Caco-2 (cell line): ENCODE measurements at regions of chr10 and their contacts with region 1.

Region 1: DNA sequence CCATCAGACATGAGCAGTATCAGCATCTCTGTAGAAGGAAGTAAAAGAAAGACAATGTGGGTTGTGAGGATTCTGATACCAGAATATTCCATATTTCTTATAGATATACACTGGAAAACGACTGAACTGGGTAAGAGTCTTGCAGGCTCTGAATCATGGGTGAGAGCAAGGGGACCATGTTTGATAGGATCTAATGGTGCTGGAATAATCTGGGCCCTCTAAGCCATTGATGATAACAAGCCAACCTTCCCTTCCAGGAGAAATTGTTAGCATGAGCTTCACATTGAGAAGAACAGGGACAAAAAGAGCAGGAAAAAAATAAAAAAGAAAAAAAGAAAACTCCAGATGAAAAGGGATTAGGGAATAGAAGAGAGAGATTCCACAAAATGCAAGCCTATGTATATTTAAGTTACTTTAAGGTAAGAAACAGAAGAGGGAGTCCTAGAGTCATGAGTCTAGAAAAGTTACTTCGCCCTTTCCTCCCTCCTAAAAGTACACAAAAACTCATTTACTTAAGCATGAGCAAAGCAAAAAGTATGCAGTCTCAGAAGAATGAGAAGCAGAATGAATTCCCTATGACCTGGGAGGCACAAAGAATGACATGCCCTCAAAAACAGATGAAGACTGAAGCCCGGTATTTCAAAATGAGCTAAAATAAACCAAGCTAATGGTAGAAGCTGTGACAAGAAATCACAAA is 181.9 kb downstream of the TMEM26 start:
- DNase-seq: peak in 1 of 2 experiments; percentile 68
- H3K4me3 ChIP-seq: no peak overlapping the region
- H3K4me3 Mint-ChIP-seq: peak overlapping the region; percentile 51
- H3K27ac Mint-ChIP-seq: peak overlapping the region; percentile 19
- H3K4me1 ChIP-seq: peaks cover 17% of the 10 kb centered on the region
- H3K4me1 Mint-ChIP-seq: peaks cover 12% of the 10 kb centered on the region
- H3K27me3 ChIP-seq: no peaks in the 10 kb centered on the region
- H3K27me3 Mint-ChIP-seq: no peaks in the 10 kb centered on the region
- CTCF ChIP-seq: peak; percentile 55 to 62

Region 2: GRCh38 chr10:61248013-61248412 is 23.3 kb before region 1 on chr10:
- CTCF ChIA-PET with region 1: no interaction called
- POLR2A ChIA-PET with region 1: no interaction called
- intact Hi-C with region 1: no loop called
- DNase-seq: no peak
- H3K4me3 ChIP-seq: no peak overlapping the region
- H3K4me3 Mint-ChIP-seq: no peak overlapping the region
- H3K27ac Mint-ChIP-seq: no peak overlapping the region
- H3K4me1 ChIP-seq: no peaks in the 10 kb centered on the region
- H3K4me1 Mint-ChIP-seq: no peaks in the 10 kb centered on the region
- H3K27me3 ChIP-seq: no peaks in the 10 kb centered on the region
- H3K27me3 Mint-ChIP-seq: peaks cover 6% of the 10 kb centered on the region
- CTCF ChIP-seq: no peak

Region 3: GRCh38 chr10:61294131-61294530 is 22.9 kb after region 1 on chr10:
- CTCF ChIA-PET with region 1: no interaction called
- POLR2A ChIA-PET with region 1: no interaction called
- intact Hi-C with region 1: no loop called
- DNase-seq: no peak
- H3K4me3 ChIP-seq: no peak overlapping the region
- H3K4me3 Mint-ChIP-seq: no peak overlapping the region
- H3K27ac Mint-ChIP-seq: no peak overlapping the region
- H3K4me1 ChIP-seq: no peaks in the 10 kb centered on the region
- H3K4me1 Mint-ChIP-seq: no peaks in the 10 kb centered on the region
- H3K27me3 ChIP-seq: peaks cover 1% of the 10 kb centered on the region; the same call in 1 of the 2 replicates
- H3K27me3 Mint-ChIP-seq: peaks cover 15% of the 10 kb centered on the region
- CTCF ChIP-seq: no peak

Region 4: DNA sequence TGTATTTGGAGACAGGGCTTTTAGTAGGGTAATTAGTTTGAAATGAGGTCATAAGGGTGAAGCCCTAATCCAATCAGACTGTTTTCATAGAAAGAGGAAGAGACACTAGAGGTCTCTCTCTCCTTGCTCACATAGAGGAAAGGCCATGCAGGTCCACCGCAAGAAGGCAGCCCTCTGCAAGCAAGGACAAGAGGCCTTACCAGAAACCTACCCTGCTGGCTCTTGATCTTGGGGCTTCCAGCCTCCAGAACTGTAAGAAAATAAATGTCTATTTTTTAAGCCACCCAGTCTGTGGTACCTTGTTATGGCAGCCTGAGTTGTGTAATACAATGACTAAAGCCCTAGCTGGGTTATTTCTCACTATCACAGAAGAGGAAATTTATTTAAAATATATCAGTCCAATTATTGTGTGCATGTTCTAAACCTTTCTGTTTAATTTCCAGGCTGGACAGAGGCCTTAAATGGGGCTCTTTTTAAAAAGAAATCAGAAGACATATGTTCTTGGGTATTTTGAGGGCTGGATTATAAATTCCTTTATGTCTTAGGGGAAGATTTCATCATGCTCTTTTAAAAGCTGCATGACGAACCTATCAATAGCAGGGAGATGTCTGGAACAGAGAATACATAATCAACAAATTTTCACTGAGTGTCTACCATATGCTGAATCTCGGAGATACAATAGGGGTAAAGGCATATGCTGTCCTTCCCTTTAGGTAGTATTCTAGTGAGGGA is 194.8 kb after region 1 on chr10:
- CTCF ChIA-PET with region 1: no interaction called
- POLR2A ChIA-PET with region 1: no interaction called
- intact Hi-C with region 1: loop called (anchors 5 kb)
- DNase-seq: peak in 1 of 2 experiments; percentile 39
- H3K4me3 ChIP-seq: no peak overlapping the region
- H3K4me3 Mint-ChIP-seq: no peak overlapping the region
- H3K27ac Mint-ChIP-seq: no peak overlapping the region
- H3K4me1 ChIP-seq: no peaks in the 10 kb centered on the region
- H3K4me1 Mint-ChIP-seq: no peaks in the 10 kb centered on the region
- H3K27me3 ChIP-seq: no peaks in the 10 kb centered on the region
- H3K27me3 Mint-ChIP-seq: peaks cover 3% of the 10 kb centered on the region
- CTCF ChIP-seq: peak in 1 of 2 experiments; percentile 23

Region 5: GRCh38 chr10:61592581-61592980 is 321.3 kb after region 1 on chr10:
- CTCF ChIA-PET with region 1: no interaction called
- POLR2A ChIA-PET with region 1: no interaction called
- intact Hi-C with region 1: loop called (anchors 1 kb)
- DNase-seq: peak; percentile 70
- H3K4me3 ChIP-seq: no peak overlapping the region
- H3K4me3 Mint-ChIP-seq: no peak overlapping the region
- H3K27ac Mint-ChIP-seq: no peak overlapping the region
- H3K4me1 ChIP-seq: no peaks in the 10 kb centered on the region
- H3K4me1 Mint-ChIP-seq: peaks cover 6% of the 10 kb centered on the region
- H3K27me3 ChIP-seq: 0 out of 2 replicates have a peak, but pooled peaks cover 1% of the 10 kb centered on the region
- H3K27me3 Mint-ChIP-seq: peaks cover 21% of the 10 kb centered on the region
- CTCF ChIP-seq: peak; percentile 81 to 88

Region 6: DNA sequence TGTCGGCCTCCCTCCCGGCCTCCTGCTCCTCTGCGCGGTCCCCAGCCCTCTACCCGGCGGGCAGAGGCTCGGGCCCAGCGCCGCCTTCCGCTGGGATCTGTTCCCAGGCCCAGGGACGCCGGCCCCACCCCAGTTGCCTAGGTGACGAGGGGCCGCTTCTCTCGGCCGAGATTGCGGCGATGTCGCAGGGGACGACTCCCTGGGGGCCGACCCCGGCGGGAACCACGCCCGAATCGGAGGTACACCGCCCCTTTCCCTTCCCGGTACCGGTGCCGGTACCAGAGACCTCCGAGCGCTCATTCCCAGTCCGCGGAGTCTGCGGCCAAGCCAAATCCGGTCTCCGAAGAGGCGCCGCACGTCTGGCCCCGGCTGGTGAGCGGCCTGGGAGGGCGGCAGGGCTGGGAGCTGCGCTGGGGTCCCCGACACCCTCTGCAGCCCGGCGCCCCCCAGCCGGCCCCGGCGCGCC is 391.6 kb after region 1 on chr10 and contains the start of gene CABCOCO1:
- CTCF ChIA-PET with region 1: no interaction called
- POLR2A ChIA-PET with region 1: no interaction called
- intact Hi-C with region 1: loop called (anchors 10 kb)
- DNase-seq: peak; percentile 78 to 87
- H3K4me3 ChIP-seq: peak within 1 kb of the TSS; percentile 61
- H3K4me3 Mint-ChIP-seq: peak within 1 kb of the TSS; percentile 63
- H3K27ac Mint-ChIP-seq: no peak within 1 kb of the TSS
- H3K4me1 ChIP-seq: no peaks in the 10 kb centered on the region
- H3K4me1 Mint-ChIP-seq: no peaks in the 10 kb centered on the region
- H3K27me3 ChIP-seq: no peaks in the 10 kb centered on the region
- H3K27me3 Mint-ChIP-seq: peaks cover 23% of the 10 kb centered on the region
- CTCF ChIP-seq: peak in 1 of 2 experiments; percentile 46
- total RNA-seq, gene CABCOCO1: not detected in 2 replicates

Region 7: GRCh38 chr10:61733358-61733940 is 462.2 kb after region 1 on chr10:
- CTCF ChIA-PET with region 1: no interaction called
- POLR2A ChIA-PET with region 1: no interaction called
- intact Hi-C with region 1: loop called (anchors 5 kb)
- DNase-seq: peak in 1 of 2 experiments; percentile 71
- H3K4me3 ChIP-seq: no peak overlapping the region
- H3K4me3 Mint-ChIP-seq: no peak overlapping the region
- H3K27ac Mint-ChIP-seq: no peak overlapping the region
- H3K4me1 ChIP-seq: no peaks in the 10 kb centered on the region
- H3K4me1 Mint-ChIP-seq: peaks cover 7% of the 10 kb centered on the region
- H3K27me3 ChIP-seq: no peaks in the 10 kb centered on the region
- H3K27me3 Mint-ChIP-seq: peaks cover 10% of the 10 kb centered on the region
- CTCF ChIP-seq: peak; percentile 80 to 87

Region 8: DNA sequence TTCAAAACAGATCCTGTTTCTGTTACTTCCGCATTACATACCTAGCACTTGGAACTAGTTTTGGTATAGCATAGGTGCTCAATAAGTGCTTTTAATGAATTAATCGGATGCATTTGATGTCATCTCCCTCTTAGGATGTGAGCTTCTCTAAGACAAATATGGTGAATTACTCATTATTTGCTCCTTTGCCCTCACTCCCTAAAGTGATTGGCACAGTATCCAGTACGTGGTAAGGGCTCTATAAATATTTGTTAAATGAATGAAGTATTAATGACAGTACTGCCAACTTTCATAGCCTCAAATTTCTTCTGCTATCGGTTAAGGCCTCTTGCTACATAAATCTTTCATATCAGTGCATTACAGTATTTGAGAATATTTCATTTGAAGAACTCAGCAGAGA is 554.3 kb after region 1 on chr10:
- CTCF ChIA-PET with region 1: no interaction called
- POLR2A ChIA-PET with region 1: no interaction called
- intact Hi-C with region 1: no loop called
- DNase-seq: no peak
- H3K4me3 ChIP-seq: no peak overlapping the region
- H3K4me3 Mint-ChIP-seq: no peak overlapping the region
- H3K27ac Mint-ChIP-seq: no peak overlapping the region
- H3K4me1 ChIP-seq: peaks cover 11% of the 10 kb centered on the region
- H3K4me1 Mint-ChIP-seq: peaks cover 31% of the 10 kb centered on the region
- H3K27me3 ChIP-seq: no peaks in the 10 kb centered on the region
- H3K27me3 Mint-ChIP-seq: no peaks in the 10 kb centered on the region
- CTCF ChIP-seq: no peak